CD14-positive monocyte (primary cell): ENCODE measurements at regions of chr18 and their contacts with region 1.

Region 1: DNA sequence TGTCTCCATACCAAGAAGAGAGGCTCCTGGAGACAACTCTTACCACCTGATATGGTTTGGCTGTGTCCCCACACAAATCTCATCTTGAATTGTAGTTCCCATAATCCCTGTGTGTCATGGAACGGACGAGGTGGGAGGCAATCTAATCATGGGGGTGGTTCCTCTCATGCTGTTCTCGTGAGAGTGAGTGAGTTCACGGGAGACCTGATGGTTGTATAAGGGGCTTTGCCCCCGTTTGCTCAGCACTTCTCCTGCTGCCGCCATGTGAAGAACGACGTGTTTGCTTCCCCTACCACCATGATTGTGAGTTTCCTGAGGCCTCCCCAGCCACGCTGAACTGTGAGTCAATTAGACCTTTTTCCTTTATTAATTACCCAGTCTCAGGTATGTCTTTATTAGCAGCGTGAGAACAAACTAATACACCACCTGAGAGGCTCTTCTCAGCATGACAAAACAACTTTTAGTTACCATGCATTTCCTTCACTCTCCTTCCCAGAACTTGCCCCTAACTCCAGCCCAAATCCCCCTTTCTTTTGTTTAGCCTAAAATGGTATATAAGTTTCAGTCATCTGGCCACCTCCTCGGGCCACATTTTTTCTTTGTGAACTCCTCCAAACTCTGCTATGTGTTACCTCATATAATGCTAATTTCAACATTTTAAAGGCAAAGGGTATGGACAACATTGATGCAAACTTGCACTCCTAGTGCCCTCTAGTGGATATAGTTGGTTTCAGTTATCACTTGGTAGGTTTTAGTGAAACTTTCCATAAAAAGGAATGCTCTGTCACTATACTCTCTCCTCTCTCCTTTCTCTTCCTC is 58.6 kb upstream of the SLC25A52 start:
- DNase-seq: peak; percentile 14 to 46 (median 33)
- H3K4me3 ChIP-seq: no peak overlapping the region
- H3K4me3 Mint-ChIP-seq: no peak overlapping the region
- H3K27ac ChIP-seq: no peak overlapping the region
- H3K27ac Mint-ChIP-seq: no peak overlapping the region
- H3K4me1 ChIP-seq: no peaks in the 10 kb centered on the region
- H3K4me1 Mint-ChIP-seq: peaks cover 13% of the 10 kb centered on the region
- H3K27me3 ChIP-seq: no peaks in the 10 kb centered on the region
- H3K27me3 Mint-ChIP-seq: peaks cover 0 to 3% (median 0%) of the 10 kb centered on the region in 3 donors
- CTCF ChIP-seq: peak; percentile 84

Region 2: DNA sequence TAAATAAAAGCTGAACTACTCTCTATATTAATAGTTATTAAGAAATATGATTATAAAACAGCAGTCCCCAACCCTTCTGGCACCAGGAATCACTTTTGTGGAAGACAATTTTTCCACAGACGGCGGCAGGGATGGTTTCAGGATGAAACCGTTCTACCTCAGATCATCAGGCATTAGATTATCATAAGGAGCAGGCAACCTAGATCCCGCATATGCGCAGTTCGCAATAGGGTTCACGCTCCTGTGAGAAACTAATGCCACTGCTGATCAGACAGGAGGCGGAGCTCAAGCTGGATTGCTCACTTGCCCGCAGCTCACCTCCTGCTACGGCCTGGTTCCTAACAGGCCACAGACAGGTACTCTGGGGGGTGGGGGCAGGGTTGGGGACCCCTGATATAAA is 340.6 kb before region 1 on chr18:
- intact Hi-C with region 1: no loop called
- DNase-seq: no peak
- H3K4me3 ChIP-seq: no peak overlapping the region
- H3K4me3 Mint-ChIP-seq: no peak overlapping the region
- H3K27ac ChIP-seq: no peak overlapping the region
- H3K27ac Mint-ChIP-seq: no peak overlapping the region
- H3K4me1 ChIP-seq: no peaks in the 10 kb centered on the region
- H3K4me1 Mint-ChIP-seq: no peaks in the 10 kb centered on the region
- H3K27me3 ChIP-seq: no peaks in the 10 kb centered on the region
- H3K27me3 Mint-ChIP-seq: peaks cover 0 to 8% (median 2%) of the 10 kb centered on the region in 3 donors
- CTCF ChIP-seq: no peak

Region 3: DNA sequence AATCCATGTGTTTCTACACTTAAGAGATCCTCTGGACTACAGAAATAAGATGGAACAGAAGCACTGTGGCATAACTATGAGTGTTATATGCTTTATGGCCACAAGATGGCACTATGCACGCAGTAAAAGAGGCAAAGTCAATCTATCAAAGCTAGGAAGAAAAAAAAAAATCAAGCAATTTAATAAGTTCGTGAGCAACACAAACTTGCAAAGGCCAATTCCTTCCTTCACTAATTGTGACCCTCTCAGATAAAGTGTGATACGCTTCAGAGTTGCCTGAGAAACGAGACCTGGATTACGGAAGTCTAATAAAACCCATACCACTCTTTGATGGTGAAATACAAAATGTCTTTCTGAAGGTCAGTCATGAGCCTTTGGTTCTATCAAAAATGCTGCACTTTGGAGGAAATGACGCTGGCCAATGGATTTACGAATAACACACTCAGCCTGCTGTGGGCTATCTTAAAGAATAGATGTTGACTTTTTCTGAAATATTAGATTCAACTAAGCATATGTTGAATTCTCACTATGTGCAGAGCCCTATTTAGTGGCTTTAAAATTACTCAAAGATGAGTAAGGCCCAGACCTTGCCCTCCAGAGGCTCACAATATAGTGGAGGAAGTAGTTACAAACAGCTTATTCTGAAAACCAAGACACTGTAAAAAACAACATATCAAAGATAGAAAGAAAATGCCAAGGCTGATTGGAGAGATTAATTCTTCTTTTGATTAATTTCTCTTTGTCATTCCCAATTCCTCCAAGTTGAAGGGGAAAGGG is 263.2 kb before region 1 on chr18:
- intact Hi-C with region 1: loop called (anchors 5 kb)
- DNase-seq: peak; percentile 36 to 62 (median 47)
- H3K4me3 ChIP-seq: no peak overlapping the region
- H3K4me3 Mint-ChIP-seq: peak overlapping the region in 1 of 2 donors; percentile 59
- H3K27ac ChIP-seq: no peak overlapping the region
- H3K27ac Mint-ChIP-seq: peak overlapping the region in 1 of 7 donors; percentile 25
- H3K4me1 ChIP-seq: no peaks in the 10 kb centered on the region
- H3K4me1 Mint-ChIP-seq: peaks cover 6% of the 10 kb centered on the region
- H3K27me3 ChIP-seq: no peaks in the 10 kb centered on the region
- H3K27me3 Mint-ChIP-seq: peaks cover 0 to 1% (median 1%) of the 10 kb centered on the region in 3 donors
- CTCF ChIP-seq: peak; percentile 94

Region 4: GRCh38 chr18:31741097-31741735 is 78.1 kb before region 1 on chr18:
- intact Hi-C with region 1: loop called in 1 of 2 experiments (anchors 5 kb)
- DNase-seq: peak; percentile 24 to 54 (median 35)
- H3K4me3 ChIP-seq: no peak overlapping the region
- H3K4me3 Mint-ChIP-seq: no peak overlapping the region
- H3K27ac ChIP-seq: no peak overlapping the region
- H3K27ac Mint-ChIP-seq: no peak overlapping the region
- H3K4me1 ChIP-seq: no peaks in the 10 kb centered on the region
- H3K4me1 Mint-ChIP-seq: peaks cover 2% of the 10 kb centered on the region
- H3K27me3 ChIP-seq: no peaks in the 10 kb centered on the region
- H3K27me3 Mint-ChIP-seq: no peaks in the 10 kb centered on the region
- CTCF ChIP-seq: peak; percentile 97

Region 5: GRCh38 chr18:32056613-32057358 is 237.5 kb after region 1 on chr18:
- intact Hi-C with region 1: no loop called
- DNase-seq: no peak
- H3K4me3 ChIP-seq: no peak overlapping the region
- H3K4me3 Mint-ChIP-seq: no peak overlapping the region
- H3K27ac ChIP-seq: no peak overlapping the region
- H3K27ac Mint-ChIP-seq: no peak overlapping the region
- H3K4me1 ChIP-seq: no peaks in the 10 kb centered on the region
- H3K4me1 Mint-ChIP-seq: no peaks in the 10 kb centered on the region
- H3K27me3 ChIP-seq: no peaks in the 10 kb centered on the region
- H3K27me3 Mint-ChIP-seq: no peaks in the 10 kb centered on the region
- CTCF ChIP-seq: no peak